A673 (cell line): ENCODE measurements at regions of chr1 and their contacts with region 1.

Region 1: GRCh38 chr1:168019407-168019806 is 82.5 kb upstream of the MPC2 start:
- DNase-seq: no peak
- H3K4me3 ChIP-seq: no peak overlapping the region
- H3K27ac ChIP-seq: no peak overlapping the region
- H3K4me1 ChIP-seq: no peaks in the 10 kb centered on the region
- H3K27me3 ChIP-seq: no peaks in the 10 kb centered on the region
- CTCF ChIP-seq: no peak

Region 2: GRCh38 chr1:168007691-168008090 is 11.7 kb before region 1 on chr1:
- CTCF ChIA-PET with region 1: no interaction called
- POLR2A ChIA-PET with region 1: interaction called, 20 read pairs
- intact Hi-C with region 1: no loop called
- DNase-seq: no peak
- H3K4me3 ChIP-seq: no peak overlapping the region
- H3K27ac ChIP-seq: no peak overlapping the region
- H3K4me1 ChIP-seq: no peaks in the 10 kb centered on the region
- H3K27me3 ChIP-seq: no peaks in the 10 kb centered on the region
- CTCF ChIP-seq: no peak

Region 3: GRCh38 chr1:168161459-168161858 is 142.1 kb after region 1 on chr1:
- CTCF ChIA-PET with region 1: no interaction called
- POLR2A ChIA-PET with region 1: no interaction called
- intact Hi-C with region 1: no loop called
- DNase-seq: peak; percentile 64
- H3K4me3 ChIP-seq: no peak overlapping the region
- H3K27ac ChIP-seq: no peak overlapping the region
- H3K4me1 ChIP-seq: no peaks in the 10 kb centered on the region
- H3K27me3 ChIP-seq: no peaks in the 10 kb centered on the region
- CTCF ChIP-seq: no peak